ENCODE measurements at regions of chr2 and their contacts with region 1.

Region 1: DNA sequence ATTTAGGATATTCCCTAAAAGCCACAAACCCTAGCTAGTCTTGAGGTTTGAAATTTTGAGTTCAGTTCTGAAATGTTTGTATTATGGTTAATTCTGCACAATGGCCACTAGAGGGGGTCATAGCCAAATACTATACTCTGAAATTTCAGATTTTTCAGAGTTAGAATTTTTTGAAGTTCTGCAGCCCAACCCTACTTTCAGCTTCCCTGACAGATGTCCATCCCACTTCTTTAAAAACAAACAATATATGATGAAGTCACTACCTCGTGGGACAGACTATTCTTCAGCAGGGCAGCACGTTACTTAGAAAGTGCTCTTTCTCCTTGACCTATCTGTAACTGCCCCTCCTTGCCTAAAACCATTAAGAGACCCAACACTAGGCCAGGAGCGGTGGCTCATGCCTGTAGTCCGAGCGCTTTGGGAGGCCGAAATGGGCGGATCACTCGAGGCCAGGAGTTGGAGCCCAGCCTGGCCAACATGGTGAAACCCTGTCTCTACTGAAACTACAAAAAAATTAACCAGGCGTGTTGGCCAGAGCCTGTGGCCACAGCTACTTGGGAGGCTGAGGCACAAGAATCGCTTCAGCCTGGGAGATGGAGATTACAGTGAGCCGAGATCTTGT is 48.2 kb upstream of the PAPOLG start:
- DNase-seq: peak in 6 of 9 donors; percentile 8 to 47 (median 34)
- ATAC-seq: peak; percentile 65
- H3K4me3 ChIP-seq: no peak overlapping the region
- H3K4me3 Mint-ChIP-seq: no peak overlapping the region
- H3K27ac ChIP-seq: no peak overlapping the region
- H3K27ac Mint-ChIP-seq: peak overlapping the region in 2 of 9 donors; percentile 4 to 39
- H3K4me1 ChIP-seq: no peaks in the 10 kb centered on the region
- H3K4me1 Mint-ChIP-seq: no peaks in the 10 kb centered on the region
- H3K27me3 ChIP-seq: no peaks in the 10 kb centered on the region
- H3K27me3 Mint-ChIP-seq: peaks cover 0 to 7% (median 0%) of the 10 kb centered on the region in 5 donors

Region 2: DNA sequence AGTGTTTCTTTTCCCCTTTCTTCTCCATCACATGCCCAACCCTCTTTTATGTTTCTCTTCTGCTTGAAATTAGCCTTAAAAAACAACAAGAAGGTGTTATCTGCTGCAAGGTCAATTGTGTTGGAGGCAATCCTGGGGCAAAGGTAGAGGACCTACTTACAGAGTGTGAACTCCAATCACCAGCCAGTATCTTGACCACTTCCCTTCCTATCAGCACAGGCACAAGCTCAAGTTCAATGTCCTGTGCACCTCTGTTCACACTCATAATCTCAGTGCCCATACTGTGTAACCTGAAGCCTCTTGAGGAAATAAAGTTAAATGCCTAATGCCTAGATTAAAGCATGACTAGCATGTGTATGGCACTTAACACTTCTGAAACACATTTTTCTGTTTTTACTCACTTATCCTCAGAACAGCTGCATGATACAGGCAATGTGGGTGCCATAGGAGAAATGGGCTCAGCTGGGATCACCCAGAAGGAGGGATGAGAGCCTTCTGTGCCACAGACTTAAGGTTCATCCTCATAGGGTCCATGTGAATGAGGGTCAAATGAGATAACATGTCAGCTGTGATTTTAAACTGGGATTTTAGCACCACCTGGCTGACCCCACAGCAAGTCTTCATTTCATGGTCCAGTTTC is 855.9 kb before region 1 on chr2:
- CTCF ChIA-PET with region 1: no interaction called
- POLR2A ChIA-PET with region 1: no interaction called
- intact Hi-C with region 1: no loop called
- DNase-seq: no peak
- ATAC-seq: no peak
- H3K4me3 ChIP-seq: no peak overlapping the region
- H3K4me3 Mint-ChIP-seq: no peak overlapping the region
- H3K27ac ChIP-seq: no peak overlapping the region
- H3K27ac Mint-ChIP-seq: no peak overlapping the region
- H3K4me1 ChIP-seq: no peaks in the 10 kb centered on the region
- H3K4me1 Mint-ChIP-seq: no peaks in the 10 kb centered on the region
- H3K27me3 ChIP-seq: no peaks in the 10 kb centered on the region
- H3K27me3 Mint-ChIP-seq: no peaks in the 10 kb centered on the region

Region 3: DNA sequence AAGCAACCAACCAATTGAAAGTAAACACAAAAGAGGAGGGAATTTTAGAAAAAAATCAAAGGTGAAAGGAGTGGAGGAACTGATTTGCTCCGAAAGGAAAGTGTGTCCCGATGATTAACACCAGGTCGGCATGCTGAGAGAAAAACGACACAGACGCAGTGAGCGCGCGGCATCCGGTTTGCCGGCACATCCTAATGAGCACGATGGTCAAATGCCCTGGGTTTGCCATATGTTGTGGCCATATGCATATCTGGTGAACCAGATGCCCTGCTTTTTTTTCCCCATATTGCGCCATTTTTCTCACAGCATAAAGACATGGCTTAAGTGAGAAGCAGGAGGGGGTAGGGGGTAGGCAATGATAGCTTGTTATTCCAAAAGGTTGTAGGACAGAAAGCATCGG is 781.1 kb before region 1 on chr2:
- CTCF ChIA-PET with region 1: no interaction called
- POLR2A ChIA-PET with region 1: no interaction called
- intact Hi-C with region 1: no loop called
- DNase-seq: no peak
- ATAC-seq: no peak
- H3K4me3 ChIP-seq: no peak overlapping the region
- H3K4me3 Mint-ChIP-seq: no peak overlapping the region
- H3K27ac ChIP-seq: no peak overlapping the region
- H3K27ac Mint-ChIP-seq: no peak overlapping the region
- H3K4me1 ChIP-seq: no peaks in the 10 kb centered on the region
- H3K4me1 Mint-ChIP-seq: peaks cover 0 to 3% (median 0%) of the 10 kb centered on the region in 7 donors
- H3K27me3 ChIP-seq: no peaks in the 10 kb centered on the region
- H3K27me3 Mint-ChIP-seq: no peaks in the 10 kb centered on the region

Region 4: GRCh38 chr2:60735496-60736250 is 27.8 kb after region 1 on chr2:
- CTCF ChIA-PET with region 1: no interaction called
- POLR2A ChIA-PET with region 1: no interaction called
- intact Hi-C with region 1: no loop called
- DNase-seq: peak in 6 of 9 donors; percentile 9 to 47 (median 30)
- ATAC-seq: peak; percentile 56
- H3K4me3 ChIP-seq: peak overlapping the region; percentile 46
- H3K4me3 Mint-ChIP-seq: peak overlapping the region; percentile 82 to 95 (median 90)
- H3K27ac ChIP-seq: no peak overlapping the region
- H3K27ac Mint-ChIP-seq: no peak overlapping the region
- H3K4me1 ChIP-seq: no peaks in the 10 kb centered on the region
- H3K4me1 Mint-ChIP-seq: peaks cover 6 to 13% (median 8%) of the 10 kb centered on the region in 7 donors
- H3K27me3 ChIP-seq: no peaks in the 10 kb centered on the region
- H3K27me3 Mint-ChIP-seq: peaks cover 30 to 49% (median 35%) of the 10 kb centered on the region in 5 donors

Region 5: GRCh38 chr2:60794277-60794863 is 86.5 kb after region 1 on chr2:
- CTCF ChIA-PET with region 1: no interaction called
- POLR2A ChIA-PET with region 1: no interaction called
- intact Hi-C with region 1: loop called (anchors 1 to 2 kb)
- DNase-seq: peak in 4 of 9 donors; percentile 20 to 44 (median 27)
- ATAC-seq: peak; percentile 64
- H3K4me3 ChIP-seq: no peak overlapping the region
- H3K4me3 Mint-ChIP-seq: no peak overlapping the region
- H3K27ac ChIP-seq: no peak overlapping the region
- H3K27ac Mint-ChIP-seq: peak overlapping the region in 2 of 9 donors; percentile 2 to 42
- H3K4me1 ChIP-seq: peaks cover 0 to 7% of the 10 kb centered on the region in 2 donors
- H3K4me1 Mint-ChIP-seq: peaks cover 0 to 16% (median 2%) of the 10 kb centered on the region in 7 donors
- H3K27me3 ChIP-seq: no peaks in the 10 kb centered on the region
- H3K27me3 Mint-ChIP-seq: no peaks in the 10 kb centered on the region

Region 6: GRCh38 chr2:60806988-60807681 is 99.3 kb after region 1 on chr2:
- CTCF ChIA-PET with region 1: interaction called, 3 read pairs
- POLR2A ChIA-PET with region 1: no interaction called
- intact Hi-C with region 1: loop called in 1 of 2 experiments (anchors 5 kb)
- DNase-seq: peak in 5 of 9 donors; percentile 15 to 53 (median 20)
- ATAC-seq: peak; percentile 65
- H3K4me3 ChIP-seq: no peak overlapping the region
- H3K4me3 Mint-ChIP-seq: peak overlapping the region; percentile 15 to 73 (median 52)
- H3K27ac ChIP-seq: peak overlapping the region; percentile 57
- H3K27ac Mint-ChIP-seq: peak overlapping the region; percentile 7 to 88 (median 73)
- H3K4me1 ChIP-seq: peaks cover 19 to 23% of the 10 kb centered on the region in 2 donors
- H3K4me1 Mint-ChIP-seq: peaks cover 28 to 51% (median 44%) of the 10 kb centered on the region in 7 donors
- H3K27me3 ChIP-seq: no peaks in the 10 kb centered on the region
- H3K27me3 Mint-ChIP-seq: no peaks in the 10 kb centered on the region

Measured in naive thymus-derived CD4-positive, alpha-beta T cell (primary cell).